Head of caudate nucleus (tissue), 42 donors: ENCODE measurements at regions of chr7 and their contacts with region 1.

Region 1: GRCh38 chr7:28695300-28696295 is 262.5 kb downstream of the TRIL start:
- DNase-seq: peak in 3 of 42 donors; percentile 38 to 63 (median 42)

Region 2: GRCh38 chr7:28615091-28615490 is 80.5 kb before region 1 on chr7:
- intact Hi-C with region 1: no loop called
- DNase-seq: peak in 26 of 42 donors; percentile 5 to 72 (median 28)

Region 3: GRCh38 chr7:28754027-28754426 is 58.4 kb after region 1 on chr7:
- intact Hi-C with region 1: loop called (anchors 5 kb)
- DNase-seq: peak; percentile 65 to 96 (median 88)